Mammary epithelial cell (primary cell): ENCODE measurements at regions of chr12 and their contacts with region 1.

Region 1: DNA sequence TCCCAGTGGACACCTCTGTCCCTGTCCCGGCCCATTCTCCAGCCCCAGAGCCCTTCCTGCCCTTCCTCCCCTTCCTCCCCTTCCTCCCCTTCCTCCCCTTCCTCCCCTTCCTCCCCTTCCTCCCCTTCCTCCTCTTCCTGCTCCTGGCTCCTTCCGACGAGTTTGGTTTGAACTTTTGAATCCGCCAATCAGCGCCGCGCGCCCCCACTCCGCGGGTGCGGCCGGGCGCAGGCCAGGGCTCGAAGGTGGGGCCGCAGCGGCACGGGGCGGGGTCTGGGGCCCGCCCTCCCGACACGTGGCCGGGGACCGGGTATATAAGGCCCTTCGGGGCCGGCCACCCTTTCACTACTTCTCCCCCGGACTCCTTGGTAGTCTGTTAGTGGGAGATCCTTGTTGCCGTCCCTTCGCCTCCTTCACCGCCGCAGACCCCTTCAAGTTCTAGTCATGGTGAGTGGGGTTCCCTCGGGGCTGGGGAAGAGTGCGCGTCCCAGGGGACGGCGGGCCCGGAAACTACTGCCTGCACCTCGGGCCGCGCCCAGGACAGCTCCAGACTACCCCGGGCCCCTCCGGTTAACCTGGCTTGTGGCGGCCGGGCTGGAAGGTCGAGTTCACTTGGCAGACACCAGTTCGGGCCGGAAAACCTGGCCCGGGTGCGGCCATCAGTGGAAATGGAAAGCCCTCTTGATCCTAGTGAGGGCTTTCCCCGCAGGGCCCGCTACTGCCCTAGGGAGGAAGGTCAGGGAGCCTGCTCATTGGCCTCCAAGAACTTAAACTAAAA is at the start of gene TUBA1C:
- DNase-seq: peak; percentile 95
- H3K4me3 ChIP-seq: peak within 1 kb of the TSS; percentile 75 to 99 (median 89)
- H3K27ac ChIP-seq: peak within 1 kb of the TSS; percentile 94
- H3K4me1 ChIP-seq: peaks cover 46% of the 10 kb centered on the region
- H3K27me3 ChIP-seq: no peaks in the 10 kb centered on the region
- CTCF ChIP-seq: no peak
- total RNA-seq, gene TUBA1C: 455 to 532 TPM

Region 2: GRCh38 chr12:49314811-49315210 is 49.9 kb after region 1 on chr12:
- CTCF ChIA-PET with region 1: no interaction called
- dilution Hi-C with region 1: loop called (anchors 10 kb)
- in situ Hi-C with region 1: no loop called
- intact Hi-C with region 1: no loop called
- DNase-seq: no peak
- H3K4me3 ChIP-seq: no peak overlapping the region
- H3K27ac ChIP-seq: no peak overlapping the region
- H3K4me1 ChIP-seq: peaks cover 2% of the 10 kb centered on the region
- H3K27me3 ChIP-seq: no peaks in the 10 kb centered on the region
- CTCF ChIP-seq: no peak